Activated CD4-positive, alpha-beta memory T cell treated with anti-CD3 and anti-CD28 coated beads for 36 hours (primary cell): ENCODE measurements at regions of chr10 and their contacts with region 1.

Region 1: GRCh38 chr10:56605051-56605450 is 244.0 kb upstream of the ZWINT start:
- DNase-seq: no peak
- H3K4me3 Mint-ChIP-seq: no peak overlapping the region
- H3K27ac Mint-ChIP-seq: no peak overlapping the region
- H3K4me1 Mint-ChIP-seq: no peaks in the 10 kb centered on the region
- H3K27me3 Mint-ChIP-seq: no peaks in the 10 kb centered on the region

Region 2: GRCh38 chr10:56586391-56587000 is 18.6 kb before region 1 on chr10:
- CTCF ChIA-PET with region 1: no interaction called
- POLR2A ChIA-PET with region 1: no interaction called
- intact Hi-C with region 1: loop called (anchors 1 kb)
- DNase-seq: no peak
- H3K4me3 Mint-ChIP-seq: no peak overlapping the region
- H3K27ac Mint-ChIP-seq: no peak overlapping the region
- H3K4me1 Mint-ChIP-seq: no peaks in the 10 kb centered on the region
- H3K27me3 Mint-ChIP-seq: no peaks in the 10 kb centered on the region